ENCODE measurements at regions of chr5 and their contacts with region 1.

Region 1: DNA sequence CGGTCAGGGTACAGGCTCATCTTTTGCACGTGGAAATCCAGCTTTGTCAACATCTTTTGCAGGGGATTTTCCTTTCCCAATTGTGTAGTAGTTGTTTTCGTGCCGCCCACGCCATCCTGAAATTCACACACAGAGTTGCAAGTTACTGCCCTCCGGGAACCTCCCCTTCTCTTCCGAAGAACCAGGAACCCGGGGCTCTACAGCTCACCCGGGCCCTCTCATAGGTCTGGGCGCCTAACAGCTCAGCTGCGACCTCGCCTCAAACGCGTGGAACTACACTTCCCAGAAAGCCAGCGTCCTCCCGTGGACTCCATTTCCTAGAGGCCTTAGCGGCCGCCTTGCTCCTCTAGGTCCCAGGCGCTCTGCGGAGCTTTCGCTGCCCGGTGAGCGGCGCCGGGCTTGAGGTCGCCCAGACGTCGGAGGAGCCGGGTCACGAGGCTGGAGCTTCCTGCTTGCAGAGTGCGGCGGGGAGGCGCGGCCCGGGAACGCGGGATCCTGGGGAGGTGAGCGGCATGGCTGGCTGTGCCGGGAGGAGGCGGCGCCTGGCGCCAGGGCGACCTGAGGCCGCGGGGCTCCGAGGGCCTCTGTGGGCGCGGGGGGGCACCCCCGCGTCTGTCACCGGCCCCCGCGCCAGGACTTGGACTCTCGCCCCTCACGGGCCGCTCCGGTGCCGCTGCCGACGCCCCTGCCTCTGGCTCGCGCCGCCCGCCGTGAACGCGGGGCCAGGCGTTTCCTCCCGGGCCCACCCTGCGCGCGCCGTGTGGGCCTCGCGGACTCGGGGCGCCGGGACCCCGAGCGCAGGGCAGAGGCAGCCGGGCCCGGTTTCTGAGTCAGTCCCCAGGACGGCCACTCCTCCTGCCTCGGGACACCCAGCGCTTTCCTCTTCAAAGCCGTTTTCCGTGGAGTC is at the start of gene ZNF354B:
- DNase-seq: peak; percentile 88 to 94 (median 92)
- H3K4me3 ChIP-seq: peak within 1 kb of the TSS; percentile 28 to 93 (median 77)
- H3K27ac ChIP-seq: peak within 1 kb of the TSS; percentile 46 to 93 (median 85)
- H3K4me1 ChIP-seq: peaks cover 0 to 9% of the 10 kb centered on the region in 2 donors
- H3K27me3 ChIP-seq: no peaks in the 10 kb centered on the region
- CTCF ChIP-seq: peak in 3 of 6 experiments; percentile 3 to 27 (median 15)
- POLR2A ChIP-seq: peak; percentile 76 to 82
- total RNA-seq, gene ZNF354B: 2.7 to 14.8 (median 12.0) TPM

Region 2: DNA sequence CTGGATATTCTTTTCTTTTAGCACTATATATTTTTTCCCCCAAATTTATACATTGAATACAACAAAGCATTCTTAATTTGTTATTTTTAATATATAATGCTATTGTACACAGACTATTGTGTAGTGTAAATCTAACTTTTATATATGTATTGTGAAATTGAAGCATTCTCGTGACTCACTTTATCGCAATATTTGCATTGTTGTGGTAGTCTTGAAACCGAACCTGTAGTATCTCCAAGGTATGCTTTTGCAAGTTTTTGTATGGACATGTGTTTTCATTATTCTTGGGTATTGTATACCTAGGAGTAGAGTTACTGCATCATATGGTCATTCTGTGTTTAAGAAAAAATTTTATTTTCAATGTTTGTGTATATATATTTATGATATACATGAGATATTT is 1676.7 kb before region 1 on chr5:
- intact Hi-C with region 1: no loop called
- DNase-seq: no peak
- H3K4me3 ChIP-seq: no peak overlapping the region
- H3K27ac ChIP-seq: no peak overlapping the region
- H3K4me1 ChIP-seq: peaks cover 0 to 12% of the 10 kb centered on the region in 2 donors
- H3K27me3 ChIP-seq: no peaks in the 10 kb centered on the region
- CTCF ChIP-seq: no peak
- POLR2A ChIP-seq: no peak

Region 3: DNA sequence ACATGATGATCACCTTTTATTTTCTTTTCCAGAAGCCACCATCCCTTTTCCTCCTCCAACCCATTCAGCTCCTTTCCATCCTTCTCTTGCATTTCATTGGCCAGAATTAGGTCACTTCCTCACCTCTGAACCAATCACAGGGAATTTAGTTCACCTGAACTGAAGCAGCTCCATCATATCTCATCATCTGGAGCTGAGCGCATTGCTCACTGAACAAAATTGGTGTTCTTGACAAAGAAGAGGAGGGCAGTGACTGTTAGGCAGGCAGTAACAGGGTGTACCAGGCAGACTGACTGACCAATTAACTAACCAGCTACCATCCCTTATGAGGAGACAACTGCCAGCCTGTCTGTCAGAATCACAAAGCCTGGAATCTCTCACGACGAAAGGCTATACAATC is 127.6 kb before region 1 on chr5:
- intact Hi-C with region 1: loop called in 1 of 2 experiments (anchors 10 kb)
- DNase-seq: no peak
- H3K4me3 ChIP-seq: no peak overlapping the region
- H3K27ac ChIP-seq: no peak overlapping the region
- H3K4me1 ChIP-seq: no peaks in the 10 kb centered on the region
- H3K27me3 ChIP-seq: no peaks in the 10 kb centered on the region
- CTCF ChIP-seq: no peak
- POLR2A ChIP-seq: no peak

Region 4: DNA sequence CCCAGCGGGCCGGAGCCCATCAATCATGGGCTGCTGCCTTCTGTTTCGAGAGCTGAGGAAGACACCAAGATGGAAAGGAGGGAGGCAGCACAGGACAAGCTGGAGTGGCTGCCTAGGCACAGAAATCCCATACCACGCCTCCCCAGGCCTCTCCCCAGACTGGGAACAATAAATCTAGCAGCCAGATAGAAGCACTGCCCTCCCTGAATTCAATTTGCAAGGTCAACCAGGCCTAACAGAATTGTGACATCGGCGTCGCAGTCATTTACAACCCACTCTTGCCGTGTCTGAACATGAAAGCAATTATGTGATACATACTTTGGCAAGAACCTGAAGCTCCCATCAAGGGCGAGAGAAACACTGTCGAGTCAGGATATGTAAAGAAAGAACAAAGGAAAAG is 94.1 kb before region 1 on chr5:
- intact Hi-C with region 1: no loop called
- DNase-seq: no peak
- H3K4me3 ChIP-seq: no peak overlapping the region
- H3K27ac ChIP-seq: no peak overlapping the region
- H3K4me1 ChIP-seq: no peaks in the 10 kb centered on the region
- H3K27me3 ChIP-seq: no peaks in the 10 kb centered on the region
- CTCF ChIP-seq: no peak
- POLR2A ChIP-seq: no peak

Measured in adrenal gland (tissue), 19 donors.